GM12878 (cell line): ENCODE measurements at regions of chr2 and their contacts with region 1.

Region 1: GRCh38 chr2:46490521-46491141 is 11.3 kb downstream of the TMEM247 start:
- DNase-seq: no peak
- ATAC-seq: peak; percentile 34
- H3K4me3 ChIP-seq: no peak overlapping the region
- H3K27ac ChIP-seq: 0 out of 2 replicates have a peak overlapping the region, but pooled peaks have one; percentile 12
- H3K4me1 ChIP-seq: peaks cover 30% of the 10 kb centered on the region
- H3K27me3 ChIP-seq: no peaks in the 10 kb centered on the region
- CTCF ChIP-seq: peak; percentile 1 to 46 (median 28); a peak in 4 of 6 replicates
- EP300 ChIP-seq: no peak
- POLR2A ChIP-seq: no peak
- RAD21 ChIP-seq: peak; percentile 65

Region 2: DNA sequence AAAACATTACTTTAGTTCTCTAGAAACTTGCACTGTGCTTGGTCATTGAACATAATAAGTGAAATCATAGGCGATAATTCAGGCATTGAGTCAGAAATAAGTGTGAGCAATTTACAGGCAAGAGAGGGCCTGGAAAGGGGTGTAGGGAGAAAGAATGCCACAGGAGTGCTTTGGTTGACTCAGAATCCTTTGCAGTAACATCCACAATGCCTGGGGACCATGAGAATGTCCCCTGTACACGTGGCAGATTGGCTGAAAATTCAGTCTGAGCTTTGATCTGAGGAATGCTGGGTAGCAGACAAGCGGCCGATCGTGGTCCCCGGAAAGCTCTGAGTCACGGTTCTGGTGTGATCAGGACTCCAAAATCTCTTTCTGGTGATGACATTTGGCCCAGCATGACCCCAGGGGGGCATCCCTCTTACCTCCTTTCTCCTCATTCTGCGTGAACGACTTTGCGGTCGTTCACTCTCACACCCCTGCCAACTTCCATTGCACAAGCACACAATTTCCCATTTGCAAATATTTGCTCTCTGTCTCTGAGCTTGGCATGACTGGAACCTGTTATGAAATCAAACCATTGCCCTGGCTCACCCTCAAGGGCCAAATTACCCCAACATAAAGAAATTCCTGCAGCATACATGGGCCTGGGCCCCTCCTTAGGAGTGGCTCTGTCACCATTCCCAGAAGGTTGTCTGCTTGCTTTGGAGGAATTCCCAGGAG is 498.4 kb before region 1 on chr2:
- CTCF ChIA-PET with region 1: no interaction called
- POLR2A ChIA-PET with region 1: no interaction called
- RAD21 ChIA-PET with region 1: no interaction called
- SMC1A ChIA-PET with region 1: no interaction called
- in situ Hi-C with region 1: no loop called
- intact Hi-C with region 1: no loop called
- DNase-seq: no peak
- ATAC-seq: no peak
- H3K4me3 ChIP-seq: no peak overlapping the region
- H3K27ac ChIP-seq: no peak overlapping the region
- H3K4me1 ChIP-seq: no peaks in the 10 kb centered on the region
- H3K27me3 ChIP-seq: no peaks in the 10 kb centered on the region
- CTCF ChIP-seq: no peak
- EP300 ChIP-seq: no peak
- POLR2A ChIP-seq: no peak
- RAD21 ChIP-seq: no peak

Region 3: DNA sequence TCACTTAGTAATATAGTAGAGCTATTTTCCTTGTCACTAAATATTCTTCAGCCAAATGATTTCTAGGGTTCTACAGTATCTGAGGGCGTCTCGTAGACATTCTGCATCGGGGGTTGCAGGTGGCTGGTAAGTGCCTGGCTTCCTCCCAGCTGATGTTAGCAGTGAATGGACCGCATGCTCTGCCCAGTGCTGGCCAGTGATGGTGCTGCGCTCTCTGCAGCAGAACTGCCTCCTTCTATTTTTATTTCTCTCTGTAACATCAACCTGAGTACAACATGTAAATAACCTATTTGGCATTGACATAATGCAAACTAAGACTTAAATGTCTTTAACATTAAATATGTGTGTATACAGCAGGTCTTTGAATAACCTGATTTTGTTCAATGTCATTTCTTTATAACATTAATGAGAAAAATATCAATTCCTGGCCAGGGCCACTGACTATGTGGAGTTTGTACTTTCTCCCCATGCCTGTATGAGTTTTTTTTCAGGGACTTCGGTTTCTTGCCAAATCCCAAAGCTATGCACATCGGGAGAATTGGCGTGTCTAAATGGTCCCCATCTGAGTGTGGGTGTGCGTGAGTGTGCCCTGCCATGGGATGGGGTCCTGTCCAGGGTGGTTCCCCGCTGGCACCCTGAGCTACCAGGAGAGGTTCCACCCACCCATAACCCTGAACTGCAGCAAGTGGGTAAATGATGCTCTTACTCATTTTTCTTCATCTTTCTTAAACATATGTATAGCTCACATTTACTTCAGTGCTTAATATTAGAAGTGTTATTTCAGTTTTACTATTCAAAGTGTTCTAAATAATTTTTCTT is 471.6 kb before region 1 on chr2:
- CTCF ChIA-PET with region 1: no interaction called
- POLR2A ChIA-PET with region 1: no interaction called
- RAD21 ChIA-PET with region 1: no interaction called
- SMC1A ChIA-PET with region 1: no interaction called
- in situ Hi-C with region 1: no loop called
- intact Hi-C with region 1: no loop called
- DNase-seq: no peak
- ATAC-seq: no peak
- H3K4me3 ChIP-seq: no peak overlapping the region
- H3K27ac ChIP-seq: no peak overlapping the region
- H3K4me1 ChIP-seq: no peaks in the 10 kb centered on the region
- H3K27me3 ChIP-seq: no peaks in the 10 kb centered on the region
- CTCF ChIP-seq: no peak
- EP300 ChIP-seq: no peak
- POLR2A ChIP-seq: no peak
- RAD21 ChIP-seq: no peak

Region 4: GRCh38 chr2:46461011-46461674 is 29.5 kb before region 1 on chr2:
- CTCF ChIA-PET with region 1: interaction called, 5 read pairs
- POLR2A ChIA-PET with region 1: no interaction called
- RAD21 ChIA-PET with region 1: interaction called, 12 read pairs
- SMC1A ChIA-PET with region 1: interaction called, 12 read pairs
- in situ Hi-C with region 1: no loop called
- intact Hi-C with region 1: no loop called
- DNase-seq: peak; percentile 39
- ATAC-seq: peak; percentile 85
- H3K4me3 ChIP-seq: no peak overlapping the region; the same call in 1 of the 2 replicates
- H3K27ac ChIP-seq: 0 out of 2 replicates have a peak overlapping the region, but pooled peaks have one; percentile 0
- H3K4me1 ChIP-seq: peaks cover 18% of the 10 kb centered on the region
- H3K27me3 ChIP-seq: no peaks in the 10 kb centered on the region; a peak in 1 of 4 replicates
- CTCF ChIP-seq: peak; percentile 97 to 99 (median 99); a peak in 5 of 6 replicates
- EP300 ChIP-seq: no peak
- POLR2A ChIP-seq: no peak
- RAD21 ChIP-seq: peak; percentile 96

Region 5: DNA sequence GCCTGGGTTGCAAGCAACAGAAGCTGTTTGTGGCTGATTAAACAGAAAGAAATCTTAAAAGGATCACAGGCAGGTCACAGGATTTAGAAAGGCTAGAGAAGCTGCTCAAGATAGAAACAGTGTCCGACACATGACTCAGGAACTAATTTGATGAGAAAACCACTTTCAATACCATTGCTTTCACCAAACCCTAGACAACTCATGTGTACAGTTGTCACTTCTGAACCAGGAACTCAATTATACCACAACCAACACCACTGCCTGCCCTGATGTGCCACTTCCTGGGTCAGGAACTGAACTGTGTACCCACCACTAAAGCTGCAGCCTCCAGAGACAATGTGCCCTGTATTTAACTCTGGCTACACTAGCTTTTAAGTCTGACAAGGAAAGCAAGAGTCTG is 44.7 kb after region 1 on chr2:
- CTCF ChIA-PET with region 1: interaction called, 4 read pairs
- POLR2A ChIA-PET with region 1: interaction called, 10 read pairs
- RAD21 ChIA-PET with region 1: interaction called, 11 read pairs
- SMC1A ChIA-PET with region 1: interaction called, 16 read pairs
- in situ Hi-C with region 1: no loop called
- intact Hi-C with region 1: no loop called
- DNase-seq: peak; percentile 96
- ATAC-seq: peak; percentile 92
- H3K4me3 ChIP-seq: peak overlapping the region; percentile 17
- H3K27ac ChIP-seq: peak overlapping the region; percentile 45
- H3K4me1 ChIP-seq: peaks cover 33% of the 10 kb centered on the region
- H3K27me3 ChIP-seq: no peaks in the 10 kb centered on the region
- CTCF ChIP-seq: no peak
- EP300 ChIP-seq: peak; percentile 58 to 88; a peak in 3 of 4 replicates
- POLR2A ChIP-seq: no peak
- RAD21 ChIP-seq: no peak

Region 6: DNA sequence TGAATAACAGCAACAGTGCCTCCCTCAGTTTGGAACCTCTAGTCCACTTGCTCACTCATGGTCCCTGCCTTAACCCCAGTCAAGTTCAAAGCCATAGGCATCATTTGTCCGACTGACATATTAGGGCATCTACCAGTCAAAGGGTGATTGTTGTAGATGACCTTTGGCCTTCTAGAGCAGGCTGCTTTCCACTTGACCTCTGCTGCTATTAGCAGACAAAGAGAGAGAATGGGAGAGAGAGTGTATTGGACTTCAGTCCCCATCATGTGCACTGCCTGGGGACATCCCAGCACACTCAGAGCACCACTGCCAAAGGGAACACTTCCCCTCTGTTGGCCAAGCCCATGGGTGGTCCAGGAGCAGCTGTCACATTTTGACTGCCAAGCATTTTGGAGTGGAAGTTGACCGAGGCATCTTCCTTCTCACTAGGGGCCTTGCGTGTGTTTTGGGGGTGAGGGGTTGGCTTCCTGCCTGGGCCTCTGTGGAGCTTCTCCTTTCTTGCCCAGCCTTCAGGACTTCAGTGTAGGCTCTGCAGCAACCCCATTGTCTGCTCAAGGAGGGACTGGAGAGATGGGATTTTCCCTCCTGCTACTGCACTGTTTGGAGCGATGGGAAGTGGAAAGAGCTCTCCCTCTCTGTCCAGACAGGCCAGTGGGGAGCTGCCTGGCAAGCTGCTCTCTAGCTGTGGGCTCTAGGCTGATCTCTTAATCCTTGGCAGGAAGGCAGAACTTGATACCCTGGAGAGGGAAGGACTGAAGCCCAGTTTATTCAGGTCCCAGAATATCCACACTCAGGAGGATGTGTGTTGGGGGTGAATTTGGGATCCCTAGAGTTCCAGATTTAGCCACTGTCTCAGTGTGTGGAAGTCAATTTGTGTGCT is 56.8 kb after region 1 on chr2:
- CTCF ChIA-PET with region 1: interaction called, 17 read pairs
- POLR2A ChIA-PET with region 1: interaction called, 5 read pairs
- RAD21 ChIA-PET with region 1: interaction called, 31 read pairs
- SMC1A ChIA-PET with region 1: interaction called, 89 read pairs
- in situ Hi-C with region 1: no loop called
- intact Hi-C with region 1: no loop called
- DNase-seq: no peak
- ATAC-seq: peak; percentile 5
- H3K4me3 ChIP-seq: peak overlapping the region; percentile 36; the same call in 1 of the 2 replicates
- H3K27ac ChIP-seq: peak overlapping the region; percentile 71
- H3K4me1 ChIP-seq: peaks cover 55% of the 10 kb centered on the region
- H3K27me3 ChIP-seq: no peaks in the 10 kb centered on the region
- CTCF ChIP-seq: no peak
- EP300 ChIP-seq: no peak
- POLR2A ChIP-seq: no peak
- RAD21 ChIP-seq: no peak

Region 7: DNA sequence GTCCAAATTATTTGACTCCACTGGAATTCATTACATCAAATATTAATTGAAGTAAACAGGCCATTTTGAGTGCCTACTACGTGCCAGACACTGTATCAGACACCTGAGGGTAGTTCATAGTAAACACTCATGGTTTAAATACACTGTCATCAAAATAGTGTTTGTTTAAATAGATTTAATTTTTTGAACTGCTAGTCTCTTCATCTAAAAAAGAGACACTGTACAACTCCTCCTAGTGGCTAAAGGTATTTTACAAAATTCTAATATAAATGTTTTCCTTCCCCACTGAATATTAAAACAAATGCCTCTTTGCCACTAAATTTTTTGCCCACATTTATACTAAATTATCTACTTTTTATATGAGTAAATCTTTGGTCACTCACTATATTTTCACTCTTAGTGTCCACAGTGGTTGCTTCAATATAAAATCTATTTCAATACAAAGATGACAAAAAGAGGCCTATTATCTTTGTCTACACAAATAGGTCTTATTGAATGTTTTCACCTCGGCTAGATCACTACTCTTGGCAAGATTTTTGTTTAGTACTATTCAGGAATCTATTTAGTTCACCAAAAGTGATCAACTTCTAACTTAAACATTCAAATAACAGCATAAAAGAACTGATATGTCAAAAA is 110.8 kb after region 1 on chr2:
- CTCF ChIA-PET with region 1: interaction called, 15 read pairs
- POLR2A ChIA-PET with region 1: no interaction called
- RAD21 ChIA-PET with region 1: interaction called, 8 read pairs
- SMC1A ChIA-PET with region 1: interaction called, 11 read pairs
- in situ Hi-C with region 1: no loop called
- intact Hi-C with region 1: no loop called
- DNase-seq: no peak
- ATAC-seq: 0 out of 3 replicates have a peak, but pooled peaks have one; percentile 21
- H3K4me3 ChIP-seq: no peak overlapping the region
- H3K27ac ChIP-seq: no peak overlapping the region
- H3K4me1 ChIP-seq: no peaks in the 10 kb centered on the region
- H3K27me3 ChIP-seq: no peaks in the 10 kb centered on the region
- CTCF ChIP-seq: peak; percentile 22 to 50 (median 31); a peak in 3 of 6 replicates
- EP300 ChIP-seq: no peak
- POLR2A ChIP-seq: no peak
- RAD21 ChIP-seq: 0 out of 2 replicates have a peak, but pooled peaks have one; percentile 38

Region 8: DNA sequence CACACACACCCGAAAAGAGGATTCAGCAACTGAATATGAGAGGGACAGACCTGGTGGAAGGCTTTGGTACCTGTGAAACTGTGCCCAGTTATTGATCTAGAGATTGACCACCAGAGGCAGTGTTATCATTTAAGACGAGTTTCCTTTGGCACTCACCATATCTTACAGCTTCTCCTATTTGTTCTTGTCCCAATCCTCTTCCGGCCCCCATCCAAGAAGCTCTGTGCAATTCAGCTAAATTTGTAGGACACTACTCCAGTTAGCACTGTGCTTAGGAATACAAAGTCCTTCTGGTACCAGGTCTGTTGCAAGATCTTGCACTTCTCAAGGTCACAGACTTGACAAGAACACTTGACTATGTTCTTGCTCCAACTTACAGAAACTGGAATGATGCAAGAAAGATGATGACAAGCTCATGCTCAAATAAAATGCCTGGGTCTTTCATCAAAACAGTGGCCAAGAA is 166.4 kb after region 1 on chr2:
- CTCF ChIA-PET with region 1: no interaction called
- POLR2A ChIA-PET with region 1: no interaction called
- RAD21 ChIA-PET with region 1: no interaction called
- SMC1A ChIA-PET with region 1: no interaction called
- in situ Hi-C with region 1: no loop called
- intact Hi-C with region 1: no loop called
- DNase-seq: no peak
- ATAC-seq: peak; percentile 94
- H3K4me3 ChIP-seq: no peak overlapping the region
- H3K27ac ChIP-seq: no peak overlapping the region
- H3K4me1 ChIP-seq: no peaks in the 10 kb centered on the region
- H3K27me3 ChIP-seq: no peaks in the 10 kb centered on the region
- CTCF ChIP-seq: peak; percentile 48 to 52 (median 50); a peak in 5 of 6 replicates
- EP300 ChIP-seq: no peak
- POLR2A ChIP-seq: no peak
- RAD21 ChIP-seq: peak; percentile 57